ENCODE measurements at regions of chrX and their contacts with region 1.

Region 1: DNA sequence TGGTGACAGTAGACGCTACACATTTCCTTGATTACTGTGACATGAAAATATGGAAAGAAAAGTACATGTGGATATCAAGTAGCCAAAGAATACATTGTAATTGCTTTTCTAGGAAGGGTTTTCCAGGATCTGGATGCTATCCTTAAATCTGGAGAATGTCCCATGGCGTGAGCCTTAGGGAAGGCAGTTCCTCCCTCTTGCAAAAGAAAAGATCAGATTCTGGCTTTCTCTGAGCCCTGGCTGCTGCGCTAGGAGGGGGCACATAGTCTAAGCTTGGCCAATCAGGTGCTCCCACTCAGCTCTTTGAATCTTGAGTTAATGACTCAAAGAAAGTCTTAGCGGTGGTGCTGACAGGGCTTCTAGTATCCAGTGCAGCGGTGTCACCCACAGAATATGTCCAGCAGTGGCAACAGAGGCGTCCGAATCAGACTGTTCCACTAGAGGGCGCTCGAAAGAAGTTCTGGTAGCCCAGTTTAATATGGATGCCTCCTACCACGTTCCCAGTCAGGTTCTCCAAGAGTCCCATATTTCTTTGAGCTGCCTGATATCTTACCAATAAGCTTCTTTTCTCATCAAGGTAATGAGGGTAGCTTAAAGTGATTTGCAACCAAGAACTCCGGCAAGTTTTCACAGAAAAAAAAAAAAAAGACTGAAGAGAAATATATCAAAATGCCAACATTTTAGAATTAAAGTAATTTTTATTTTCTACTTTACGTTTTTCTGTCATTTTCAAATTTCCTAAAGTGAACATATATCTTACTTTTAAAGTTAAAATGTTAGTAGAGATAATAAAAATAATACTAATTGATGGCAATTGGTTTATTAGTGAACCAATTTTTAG is 213.4 kb upstream of the S100G start:
- DNase-seq: peak; percentile 8 to 73 (median 56)
- ATAC-seq: peak; percentile 46
- H3K4me3 ChIP-seq: no peak overlapping the region
- H3K4me3 Mint-ChIP-seq: no peak overlapping the region
- H3K27ac ChIP-seq: no peak overlapping the region
- H3K27ac Mint-ChIP-seq: no peak overlapping the region
- H3K4me1 ChIP-seq: peaks cover 15% of the 10 kb centered on the region
- H3K4me1 Mint-ChIP-seq: peaks cover 15% of the 10 kb centered on the region
- H3K27me3 ChIP-seq: no peaks in the 10 kb centered on the region
- H3K27me3 Mint-ChIP-seq: no peaks in the 10 kb centered on the region
- CTCF ChIP-seq: peak; percentile 60

Region 2: DNA sequence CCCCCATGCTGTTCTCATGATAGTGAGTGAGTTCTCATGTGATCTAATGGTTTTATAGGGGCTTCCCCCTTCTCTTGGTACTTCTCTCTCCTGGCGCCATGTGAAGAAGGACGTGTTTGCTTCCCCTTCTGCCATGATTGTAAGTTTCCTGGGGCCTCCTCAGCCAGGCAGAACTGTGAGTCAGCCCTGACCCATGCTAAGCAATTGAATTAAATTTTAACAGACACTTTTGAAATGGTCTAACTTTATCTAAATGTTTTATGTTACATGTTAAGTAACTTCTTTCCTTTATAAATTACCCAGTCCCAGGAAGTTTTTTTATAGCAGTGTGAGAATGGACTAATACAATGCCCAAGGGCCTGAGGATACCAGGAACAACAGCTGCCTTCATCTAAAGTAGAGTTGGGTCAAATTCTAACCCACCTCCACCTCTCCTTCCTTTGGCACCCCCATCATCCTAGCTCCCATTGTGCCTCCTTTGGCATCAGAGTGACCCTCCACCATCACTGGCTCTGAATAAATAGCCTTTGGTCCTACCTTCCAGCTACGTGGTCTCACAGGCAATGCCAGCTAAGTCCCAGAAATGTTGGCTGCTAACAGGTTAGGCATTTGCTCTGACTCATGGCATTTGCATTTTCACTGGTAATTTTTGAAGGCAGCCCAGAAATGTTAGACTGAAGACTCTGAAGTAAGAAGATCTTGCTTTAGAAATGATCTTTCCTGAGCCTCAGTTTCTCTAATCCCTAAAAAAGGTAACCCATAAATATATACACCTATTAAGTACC is 1381.2 kb before region 1 on chrX:
- CTCF ChIA-PET with region 1: no interaction called
- POLR2A ChIA-PET with region 1: no interaction called
- intact Hi-C with region 1: no loop called
- DNase-seq: no peak
- ATAC-seq: no peak
- H3K4me3 ChIP-seq: no peak overlapping the region
- H3K4me3 Mint-ChIP-seq: no peak overlapping the region
- H3K27ac ChIP-seq: no peak overlapping the region
- H3K27ac Mint-ChIP-seq: no peak overlapping the region
- H3K4me1 ChIP-seq: no peaks in the 10 kb centered on the region
- H3K4me1 Mint-ChIP-seq: no peaks in the 10 kb centered on the region
- H3K27me3 ChIP-seq: no peaks in the 10 kb centered on the region
- H3K27me3 Mint-ChIP-seq: peaks cover 4% of the 10 kb centered on the region
- CTCF ChIP-seq: no peak

Region 3: DNA sequence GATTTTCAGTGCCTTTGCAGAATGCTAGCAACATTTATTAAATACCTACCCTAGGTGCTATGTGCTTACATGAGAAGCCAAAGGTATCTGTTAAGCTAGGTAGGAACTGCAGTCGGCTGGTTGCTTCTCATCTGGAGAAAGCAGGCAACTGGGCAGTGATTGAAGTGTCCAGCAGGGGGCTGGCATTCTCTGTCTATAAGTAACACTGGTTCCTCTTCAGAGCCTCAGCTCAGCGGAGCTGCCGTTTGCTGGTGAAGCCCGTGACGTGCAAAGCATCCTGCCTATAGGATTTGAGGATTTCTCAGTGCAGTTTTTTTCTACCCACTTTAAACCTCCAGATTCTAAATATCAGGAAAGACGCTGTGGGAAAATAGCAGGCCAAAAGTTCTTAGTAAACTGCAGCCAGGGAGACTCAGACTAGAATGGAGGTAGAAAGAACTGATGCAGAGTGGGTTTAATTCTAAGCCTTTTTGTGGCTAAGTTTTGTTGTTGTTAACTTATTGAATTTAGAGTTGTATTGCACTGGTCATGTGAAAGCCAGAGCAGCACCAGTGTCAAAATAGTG is 313.3 kb before region 1 on chrX and contains the start of gene GRPR:
- CTCF ChIA-PET with region 1: no interaction called
- POLR2A ChIA-PET with region 1: no interaction called
- intact Hi-C with region 1: loop called (anchors 10 kb)
- DNase-seq: peak in 8 of 9 experiments; percentile 19 to 64 (median 50)
- ATAC-seq: peak; percentile 83
- H3K4me3 ChIP-seq: no peak within 1 kb of the TSS
- H3K4me3 Mint-ChIP-seq: no peak within 1 kb of the TSS
- H3K27ac ChIP-seq: no peak within 1 kb of the TSS
- H3K27ac Mint-ChIP-seq: no peak within 1 kb of the TSS
- H3K4me1 ChIP-seq: no peaks in the 10 kb centered on the region
- H3K4me1 Mint-ChIP-seq: peaks cover 7% of the 10 kb centered on the region
- H3K27me3 ChIP-seq: no peaks in the 10 kb centered on the region
- H3K27me3 Mint-ChIP-seq: peaks cover 6% of the 10 kb centered on the region
- CTCF ChIP-seq: peak; percentile 24
- total RNA-seq, gene GRPR: 0.17 TPM in 1 of 2 experiments, not detected in the other

Region 4: DNA sequence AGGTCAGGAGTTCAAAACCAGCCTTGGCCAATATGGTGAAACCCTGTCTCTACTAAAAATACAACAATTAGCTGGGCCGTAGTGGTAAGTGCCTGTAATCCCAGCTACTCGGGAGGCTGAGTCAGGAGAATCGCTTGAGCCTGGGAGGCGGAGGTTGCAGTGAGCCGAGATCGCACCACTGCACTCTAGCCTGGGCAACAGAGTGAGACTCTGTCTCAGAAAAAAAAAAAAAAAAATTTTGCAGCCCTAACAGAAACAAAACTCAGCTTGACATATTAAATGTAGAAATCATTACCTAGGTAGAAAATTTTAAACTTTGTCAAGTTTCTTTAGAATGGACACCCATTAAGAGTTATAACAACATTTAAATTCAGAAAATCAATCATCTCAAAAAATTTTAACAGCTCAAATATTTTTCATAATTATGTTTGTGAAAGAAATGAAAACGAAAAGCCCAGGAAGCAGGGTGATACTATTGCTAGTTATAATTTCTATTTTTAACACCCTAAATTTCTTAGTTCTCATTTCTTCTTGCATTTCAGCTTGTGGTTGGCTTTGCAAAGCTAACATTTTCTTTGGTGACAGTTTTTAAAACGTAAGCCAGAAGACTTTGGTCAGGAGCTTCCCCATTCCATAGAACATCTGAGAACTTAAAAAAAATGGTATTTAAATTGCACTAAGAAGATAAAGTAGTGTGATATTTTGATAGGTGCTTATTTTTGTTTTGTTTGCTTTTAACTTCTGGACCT is 466.9 kb after region 1 on chrX:
- CTCF ChIA-PET with region 1: no interaction called
- POLR2A ChIA-PET with region 1: no interaction called
- intact Hi-C with region 1: no loop called
- DNase-seq: no peak
- ATAC-seq: no peak
- H3K4me3 ChIP-seq: no peak overlapping the region
- H3K4me3 Mint-ChIP-seq: no peak overlapping the region
- H3K27ac ChIP-seq: no peak overlapping the region
- H3K27ac Mint-ChIP-seq: no peak overlapping the region
- H3K4me1 ChIP-seq: no peaks in the 10 kb centered on the region
- H3K4me1 Mint-ChIP-seq: no peaks in the 10 kb centered on the region
- H3K27me3 ChIP-seq: no peaks in the 10 kb centered on the region
- H3K27me3 Mint-ChIP-seq: peaks cover 5% of the 10 kb centered on the region
- CTCF ChIP-seq: no peak

Measured in CD8-positive, alpha-beta T cell (primary cell).